PC-3 (cell line): ENCODE measurements at regions of chr15 and their contacts with region 1.

Region 1: GRCh38 chr15:68304589-68305337 is 27.2 kb downstream of the FEM1B start:
- DNase-seq: no peak
- ATAC-seq: no peak
- H3K4me3 ChIP-seq: no peak overlapping the region
- H3K27ac ChIP-seq: no peak overlapping the region
- H3K4me1 ChIP-seq: no peaks in the 10 kb centered on the region
- H3K27me3 ChIP-seq: no peaks in the 10 kb centered on the region
- CTCF ChIP-seq: no peak

Region 2: DNA sequence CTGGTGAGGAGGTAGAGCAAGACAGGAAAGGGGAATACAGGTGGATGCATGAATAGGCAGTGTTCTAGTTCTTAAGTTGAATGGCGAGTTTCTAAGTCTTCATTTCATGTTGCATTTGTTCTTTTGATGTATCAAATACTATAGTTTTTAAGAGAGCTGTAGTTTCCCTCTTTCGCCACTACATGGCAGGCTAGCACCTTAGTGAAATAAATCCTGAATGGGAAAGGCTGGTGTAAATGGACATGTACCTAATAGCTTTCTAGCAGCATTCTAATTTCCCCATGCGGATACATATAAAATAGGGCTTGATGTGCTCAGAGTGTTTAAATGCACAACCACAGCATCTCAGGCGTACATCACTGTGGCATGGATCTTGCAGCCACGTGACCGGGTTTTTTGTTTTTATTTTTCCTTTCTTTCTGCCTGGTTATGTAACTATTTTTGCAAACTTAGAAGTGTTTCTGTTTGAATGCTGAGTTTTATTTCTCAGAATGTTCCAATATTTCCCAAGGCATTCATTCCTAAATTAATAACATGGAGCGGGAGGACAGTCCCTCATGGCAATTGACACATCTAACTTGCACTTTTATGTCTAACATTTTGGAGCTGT is 51.7 kb before region 1 on chr15:
- CTCF ChIA-PET with region 1: interaction called, 31 read pairs
- POLR2A ChIA-PET with region 1: no interaction called
- intact Hi-C with region 1: loop called (anchors 1 kb)
- DNase-seq: peak; percentile 87
- ATAC-seq: peak; percentile 65
- H3K4me3 ChIP-seq: no peak overlapping the region
- H3K27ac ChIP-seq: no peak overlapping the region
- H3K4me1 ChIP-seq: peaks cover 9% of the 10 kb centered on the region; the same call in 1 of the 2 replicates
- H3K27me3 ChIP-seq: no peaks in the 10 kb centered on the region
- CTCF ChIP-seq: peak; percentile 84

Region 3: GRCh38 chr15:68284616-68285258 is 20.0 kb before region 1 on chr15:
- CTCF ChIA-PET with region 1: no interaction called
- POLR2A ChIA-PET with region 1: no interaction called
- intact Hi-C with region 1: no loop called
- DNase-seq: no peak
- ATAC-seq: no peak
- H3K4me3 ChIP-seq: no peak overlapping the region
- H3K27ac ChIP-seq: no peak overlapping the region
- H3K4me1 ChIP-seq: peaks cover 19% of the 10 kb centered on the region
- H3K27me3 ChIP-seq: no peaks in the 10 kb centered on the region
- CTCF ChIP-seq: no peak

Region 4: DNA sequence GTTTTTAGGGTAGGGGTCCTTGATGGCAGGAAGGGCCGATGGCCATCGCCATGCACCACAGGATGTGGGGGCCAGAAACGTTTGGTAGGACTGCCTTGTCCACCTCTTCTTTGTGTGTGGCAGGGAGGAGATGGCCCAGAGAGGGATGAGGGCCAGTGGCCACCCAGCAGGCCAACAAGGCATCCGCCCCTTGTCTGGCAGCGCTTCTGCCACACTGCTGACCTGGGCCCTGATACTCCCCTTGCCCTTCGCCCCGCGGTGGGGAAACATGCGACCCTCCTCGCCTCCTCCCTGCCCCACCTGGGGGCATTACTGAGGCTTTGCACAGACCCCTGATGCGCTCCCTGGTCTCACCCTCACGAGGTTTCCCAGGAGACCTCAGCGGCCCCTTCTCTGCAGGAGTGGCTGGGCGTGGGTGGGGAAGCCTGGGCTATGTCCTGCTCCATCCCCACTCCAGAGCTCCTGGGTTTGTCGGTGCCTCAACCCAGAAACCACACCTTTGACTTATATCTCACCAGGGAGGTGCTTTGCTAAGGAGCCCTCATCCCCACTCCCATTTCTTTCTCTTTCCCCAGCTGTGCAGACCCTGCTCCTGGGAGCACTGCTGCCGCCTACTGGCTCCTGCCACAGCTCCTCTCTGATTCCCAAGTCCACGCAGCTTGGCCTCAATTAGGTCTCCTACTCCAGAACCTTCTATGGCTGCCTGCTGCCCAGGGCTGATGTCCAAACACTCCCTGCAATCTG is 11.5 kb after region 1 on chr15:
- CTCF ChIA-PET with region 1: no interaction called
- POLR2A ChIA-PET with region 1: no interaction called
- intact Hi-C with region 1: no loop called
- DNase-seq: peak; percentile 20
- ATAC-seq: no peak; the same call in 1 of the 2 replicates
- H3K4me3 ChIP-seq: no peak overlapping the region
- H3K27ac ChIP-seq: no peak overlapping the region
- H3K4me1 ChIP-seq: no peaks in the 10 kb centered on the region
- H3K27me3 ChIP-seq: no peaks in the 10 kb centered on the region
- CTCF ChIP-seq: peak; percentile 62

Region 5: GRCh38 chr15:68372291-68372811 is 67.6 kb after region 1 on chr15:
- CTCF ChIA-PET with region 1: no interaction called
- POLR2A ChIA-PET with region 1: no interaction called
- intact Hi-C with region 1: loop called (anchors 1 kb)
- DNase-seq: peak; percentile 43
- ATAC-seq: peak; percentile 70
- H3K4me3 ChIP-seq: no peak overlapping the region
- H3K27ac ChIP-seq: no peak overlapping the region
- H3K4me1 ChIP-seq: no peaks in the 10 kb centered on the region
- H3K27me3 ChIP-seq: no peaks in the 10 kb centered on the region
- CTCF ChIP-seq: peak; percentile 56

Region 6: GRCh38 chr15:68383161-68384074 is 78.7 kb after region 1 on chr15:
- CTCF ChIA-PET with region 1: no interaction called
- POLR2A ChIA-PET with region 1: no interaction called
- intact Hi-C with region 1: loop called (anchors 1 kb)
- DNase-seq: peak; percentile 69
- ATAC-seq: no peak
- H3K4me3 ChIP-seq: no peak overlapping the region
- H3K27ac ChIP-seq: peak overlapping the region; percentile 44; the same call in 1 of the 2 replicates
- H3K4me1 ChIP-seq: peaks cover 18% of the 10 kb centered on the region
- H3K27me3 ChIP-seq: no peaks in the 10 kb centered on the region
- CTCF ChIP-seq: peak; percentile 80

Region 7: GRCh38 chr15:68543165-68544008 is 238.6 kb after region 1 on chr15:
- CTCF ChIA-PET with region 1: no interaction called
- POLR2A ChIA-PET with region 1: no interaction called
- intact Hi-C with region 1: loop called (anchors 10 kb)
- DNase-seq: peak; percentile 55
- ATAC-seq: peak; percentile 55
- H3K4me3 ChIP-seq: no peak overlapping the region
- H3K27ac ChIP-seq: no peak overlapping the region
- H3K4me1 ChIP-seq: no peaks in the 10 kb centered on the region
- H3K27me3 ChIP-seq: no peaks in the 10 kb centered on the region; the same call in 1 of the 2 replicates
- CTCF ChIP-seq: no peak

Region 8: DNA sequence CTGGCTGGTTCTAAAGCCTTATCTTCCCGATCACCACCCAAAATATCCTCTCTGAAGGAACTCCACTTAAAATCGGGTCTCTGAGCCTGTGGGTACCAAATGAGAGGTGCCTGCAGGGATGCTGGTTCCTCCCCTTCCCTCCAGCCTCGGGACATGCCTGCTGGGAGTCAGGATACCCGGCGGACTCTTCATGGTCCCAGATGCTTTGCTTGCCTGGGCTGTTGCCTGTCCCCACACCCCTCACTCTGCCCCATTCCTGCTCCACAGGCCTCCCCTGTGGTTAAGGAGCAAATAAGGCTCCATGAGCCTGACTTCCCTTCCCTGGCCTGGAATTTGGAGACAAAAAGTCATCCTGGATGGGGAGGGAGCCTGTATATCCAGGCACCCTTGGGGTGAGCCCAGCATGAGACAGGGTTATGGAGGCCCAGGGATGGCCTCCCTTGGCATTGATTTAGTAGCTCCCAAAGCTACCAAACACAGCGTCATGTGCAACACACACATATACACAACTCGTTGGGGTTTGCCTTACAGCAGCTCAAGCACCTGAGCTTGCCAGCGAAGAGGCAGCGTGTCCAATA is 261.7 kb after region 1 on chr15:
- CTCF ChIA-PET with region 1: no interaction called
- POLR2A ChIA-PET with region 1: no interaction called
- intact Hi-C with region 1: loop called (anchors 5 kb)
- DNase-seq: no peak
- ATAC-seq: no peak
- H3K4me3 ChIP-seq: no peak overlapping the region
- H3K27ac ChIP-seq: no peak overlapping the region
- H3K4me1 ChIP-seq: no peaks in the 10 kb centered on the region
- H3K27me3 ChIP-seq: 0 out of 2 replicates have a peak, but pooled peaks cover 9% of the 10 kb centered on the region
- CTCF ChIP-seq: no peak

Region 9: DNA sequence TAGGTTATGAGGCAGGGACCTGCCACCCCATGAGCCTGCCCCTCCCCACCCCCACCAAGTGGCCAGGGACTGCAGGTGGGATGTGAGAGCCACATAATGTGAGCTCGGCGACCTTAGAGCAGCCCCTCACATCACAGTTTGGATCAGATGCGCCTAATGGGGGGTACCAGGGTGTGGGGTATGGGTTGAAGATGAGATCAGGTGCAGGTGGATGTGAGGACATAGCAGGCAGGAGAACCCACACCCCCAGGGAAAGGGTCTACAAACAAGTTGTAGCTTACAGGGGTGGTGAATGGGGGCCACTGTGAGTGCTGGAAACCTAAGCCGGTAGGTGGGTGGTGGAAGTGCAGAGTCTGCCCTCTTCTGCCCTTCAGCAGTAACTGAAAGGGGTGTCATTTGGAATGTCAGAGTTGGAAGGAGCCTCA is 368.0 kb after region 1 on chr15:
- CTCF ChIA-PET with region 1: no interaction called
- POLR2A ChIA-PET with region 1: no interaction called
- intact Hi-C with region 1: loop called (anchors 1 kb)
- DNase-seq: peak; percentile 7
- ATAC-seq: no peak
- H3K4me3 ChIP-seq: no peak overlapping the region
- H3K27ac ChIP-seq: no peak overlapping the region
- H3K4me1 ChIP-seq: no peaks in the 10 kb centered on the region
- H3K27me3 ChIP-seq: no peaks in the 10 kb centered on the region
- CTCF ChIP-seq: peak; percentile 31; the same call in 1 of the 2 replicates